A673 (cell line): ENCODE measurements at regions of chr12 and their contacts with region 1.

Region 1: GRCh38 chr12:16018306-16018705 is 107.2 kb downstream of the DERA start:
- DNase-seq: no peak
- H3K4me3 ChIP-seq: no peak overlapping the region
- H3K27ac ChIP-seq: no peak overlapping the region
- H3K4me1 ChIP-seq: no peaks in the 10 kb centered on the region
- H3K27me3 ChIP-seq: no peaks in the 10 kb centered on the region
- CTCF ChIP-seq: no peak

Region 2: DNA sequence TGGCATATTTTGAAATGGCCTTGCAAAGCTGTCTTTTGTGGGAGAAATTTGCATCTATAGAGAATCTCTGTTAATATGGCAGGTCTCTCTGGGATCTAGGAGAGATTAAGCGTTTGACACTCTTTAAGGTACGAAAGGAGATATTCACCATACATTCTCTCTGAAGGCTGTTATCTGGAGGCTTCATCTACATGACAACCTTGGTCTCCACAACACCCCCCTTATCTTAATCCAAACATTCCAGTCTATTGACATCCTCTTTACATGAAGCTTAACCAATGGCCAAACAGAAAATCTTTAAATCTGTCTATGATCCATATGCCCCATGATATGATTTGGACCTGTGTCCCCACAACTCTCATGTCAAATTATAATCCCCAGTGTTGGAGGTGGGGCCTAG is 30.2 kb after region 1 on chr12:
- CTCF ChIA-PET with region 1: no interaction called
- POLR2A ChIA-PET with region 1: interaction called, 13 read pairs
- intact Hi-C with region 1: no loop called
- DNase-seq: no peak
- H3K4me3 ChIP-seq: no peak overlapping the region
- H3K27ac ChIP-seq: no peak overlapping the region
- H3K4me1 ChIP-seq: no peaks in the 10 kb centered on the region
- H3K27me3 ChIP-seq: no peaks in the 10 kb centered on the region
- CTCF ChIP-seq: no peak